PC-3 (cell line): ENCODE measurements at regions of chr3 and their contacts with region 1.

Region 1: GRCh38 chr3:48194446-48195071 is 6.3 kb upstream of the CDC25A start:
- DNase-seq: peak; percentile 89
- ATAC-seq: peak; percentile 90
- H3K4me3 ChIP-seq: no peak overlapping the region; the same call in 1 of the 2 replicates
- H3K27ac ChIP-seq: no peak overlapping the region
- H3K4me1 ChIP-seq: no peaks in the 10 kb centered on the region
- H3K27me3 ChIP-seq: no peaks in the 10 kb centered on the region
- CTCF ChIP-seq: peak; percentile 95

Region 2: DNA sequence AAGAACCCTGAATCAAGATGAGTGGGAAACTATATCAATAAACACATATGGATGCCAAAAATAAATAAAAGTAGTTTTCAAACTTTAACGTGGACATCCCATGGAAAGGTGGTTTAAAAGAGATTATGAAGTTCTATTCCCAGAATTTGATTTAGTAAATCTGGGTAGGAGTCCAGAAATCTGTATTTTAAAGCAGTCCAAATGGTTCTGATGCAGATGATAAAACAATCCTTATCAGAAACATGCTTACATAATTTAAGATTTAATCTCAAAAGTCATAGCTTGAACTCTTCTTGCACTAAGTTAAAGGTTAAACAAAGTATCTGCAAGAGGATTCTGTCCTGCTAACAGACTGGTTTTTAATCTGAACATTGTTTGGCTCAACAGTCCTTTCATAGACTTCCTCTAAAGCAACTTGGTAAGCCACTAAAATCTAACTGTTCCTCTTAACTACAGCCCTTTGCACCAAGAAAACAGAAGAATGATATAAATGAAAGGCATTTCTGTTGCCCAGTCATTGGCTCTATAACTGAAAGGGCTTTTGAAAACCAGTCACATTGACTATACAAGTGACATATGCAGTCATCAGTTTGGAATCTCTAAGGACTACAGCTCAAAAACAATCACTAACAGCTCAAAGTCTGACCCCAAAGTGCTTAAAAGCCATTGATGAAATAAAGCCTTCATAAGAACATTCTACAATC is 154.9 kb before region 1 on chr3:
- CTCF ChIA-PET with region 1: no interaction called
- POLR2A ChIA-PET with region 1: no interaction called
- intact Hi-C with region 1: no loop called
- DNase-seq: peak; percentile 66
- ATAC-seq: peak; percentile 63
- H3K4me3 ChIP-seq: no peak overlapping the region
- H3K27ac ChIP-seq: peak overlapping the region; percentile 21
- H3K4me1 ChIP-seq: peaks cover 28% of the 10 kb centered on the region
- H3K27me3 ChIP-seq: no peaks in the 10 kb centered on the region
- CTCF ChIP-seq: no peak

Region 3: GRCh38 chr3:48232734-48233133 is 38.2 kb after region 1 on chr3:
- CTCF ChIA-PET with region 1: no interaction called
- POLR2A ChIA-PET with region 1: no interaction called
- intact Hi-C with region 1: loop called (anchors 2 kb)
- DNase-seq: peak; percentile 84
- ATAC-seq: peak; percentile 100
- H3K4me3 ChIP-seq: peak overlapping the region; percentile 36; the same call in 1 of the 2 replicates
- H3K27ac ChIP-seq: no peak overlapping the region
- H3K4me1 ChIP-seq: peaks cover 4% of the 10 kb centered on the region; the same call in 1 of the 2 replicates
- H3K27me3 ChIP-seq: no peaks in the 10 kb centered on the region
- CTCF ChIP-seq: peak; percentile 93

Region 4: GRCh38 chr3:48268381-48269183 is 74.0 kb after region 1 on chr3:
- CTCF ChIA-PET with region 1: interaction called, 5 read pairs
- POLR2A ChIA-PET with region 1: no interaction called
- intact Hi-C with region 1: loop called (anchors 1 kb)
- DNase-seq: peak; percentile 97
- ATAC-seq: peak; percentile 98
- H3K4me3 ChIP-seq: peak overlapping the region; percentile 47
- H3K27ac ChIP-seq: peak overlapping the region; percentile 93
- H3K4me1 ChIP-seq: peaks cover 28% of the 10 kb centered on the region
- H3K27me3 ChIP-seq: no peaks in the 10 kb centered on the region
- CTCF ChIP-seq: no peak

Region 5: GRCh38 chr3:48305400-48305799 is 110.8 kb after region 1 on chr3:
- CTCF ChIA-PET with region 1: no interaction called
- POLR2A ChIA-PET with region 1: no interaction called
- intact Hi-C with region 1: no loop called
- DNase-seq: peak; percentile 10
- ATAC-seq: no peak
- H3K4me3 ChIP-seq: no peak overlapping the region
- H3K27ac ChIP-seq: no peak overlapping the region
- H3K4me1 ChIP-seq: peaks cover 9% of the 10 kb centered on the region
- H3K27me3 ChIP-seq: no peaks in the 10 kb centered on the region
- CTCF ChIP-seq: no peak